H1 (cell line): ENCODE measurements at regions of chr20 and their contacts with region 1.

Region 1: DNA sequence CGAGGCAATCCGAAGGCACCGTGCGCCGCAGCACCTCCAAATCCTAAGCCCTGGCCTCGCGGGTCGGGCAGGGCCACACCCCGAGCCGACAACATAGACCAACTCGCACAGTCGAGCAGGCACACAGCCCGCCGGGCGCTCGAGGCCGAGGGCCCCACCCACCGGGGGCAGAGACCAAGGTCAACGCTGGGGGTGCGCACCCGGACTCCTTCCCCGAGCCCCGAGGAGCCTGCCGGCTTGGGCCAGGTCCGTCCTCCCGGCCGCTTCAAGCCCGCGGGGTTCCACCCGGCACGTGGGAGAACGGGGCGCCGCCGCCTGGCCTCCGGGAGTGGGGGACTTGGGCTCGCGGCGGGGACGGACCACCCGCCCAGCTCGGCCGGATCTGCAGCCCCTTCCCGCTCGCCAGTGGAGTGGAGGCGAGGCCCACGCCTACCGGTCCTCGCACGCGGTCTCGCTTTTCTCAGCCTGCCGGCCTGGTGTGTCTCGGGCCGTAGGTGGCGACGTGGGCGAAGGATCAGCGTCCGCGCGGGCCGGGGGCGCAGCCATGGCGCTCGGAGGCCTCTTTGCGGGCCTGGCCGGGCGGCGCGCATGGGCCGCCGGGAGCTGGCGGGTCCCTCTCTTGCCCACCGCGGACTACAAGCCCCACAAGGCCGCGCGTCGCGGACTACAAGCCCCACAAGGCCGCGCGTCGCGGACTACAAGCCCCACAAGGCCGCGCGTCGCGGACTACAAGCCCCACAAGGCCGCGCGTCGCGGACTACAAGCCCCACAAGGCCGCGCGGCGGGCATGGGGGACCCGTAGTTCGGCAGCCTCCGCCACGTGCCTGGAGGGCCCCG is at the start of gene UCKL1:
- DNase-seq: peak in 1 of 2 experiments; percentile 91
- H3K4me3 ChIP-seq: peak within 1 kb of the TSS; percentile 94 to 98 (median 96)
- H3K27ac ChIP-seq: peak within 1 kb of the TSS; percentile 69
- H3K4me1 ChIP-seq: peaks cover 0 to 19% (median 12%) of the 10 kb centered on the region in 4 experiments; a peak in 6 of 7 replicates
- H3K27me3 ChIP-seq: no peaks in the 10 kb centered on the region
- CTCF ChIP-seq: no peak
- EP300 ChIP-seq: no peak
- POLR2A ChIP-seq: peak in 1 of 2 experiments; percentile 84; a peak in 1 of 3 replicates
- RAD21 ChIP-seq: no peak
- total RNA-seq, gene UCKL1: 36.5 and 37.4 TPM in 2 replicates

Region 2: DNA sequence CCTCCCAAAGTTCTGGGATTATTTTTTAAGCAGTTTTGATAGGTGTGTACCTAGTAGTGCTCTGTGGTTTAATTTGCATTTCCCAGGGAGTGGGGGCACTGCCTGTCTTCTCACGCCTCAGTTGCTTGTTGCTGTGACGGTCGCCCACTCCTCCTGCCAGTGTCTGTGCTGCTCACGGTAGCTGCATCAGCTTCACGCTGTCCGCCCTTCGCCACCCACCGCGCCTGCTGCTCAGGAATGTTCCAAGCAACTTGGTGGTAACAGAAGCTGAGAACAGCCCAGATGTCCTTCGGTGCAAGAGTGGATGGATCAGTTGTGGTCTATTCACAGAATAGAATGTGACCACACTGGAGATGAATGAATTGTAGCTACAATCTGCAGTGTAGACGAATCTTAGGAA is 38.2 kb before region 1 on chr20:
- CTCF ChIA-PET with region 1: no interaction called
- POLR2A ChIA-PET with region 1: no interaction called
- DNase-seq: no peak
- H3K4me3 ChIP-seq: no peak overlapping the region
- H3K27ac ChIP-seq: no peak overlapping the region
- H3K4me1 ChIP-seq: no peaks in the 10 kb centered on the region; a peak in 2 of 7 replicates
- H3K27me3 ChIP-seq: no peaks in the 10 kb centered on the region
- CTCF ChIP-seq: no peak
- EP300 ChIP-seq: no peak
- POLR2A ChIP-seq: no peak
- RAD21 ChIP-seq: no peak

Region 3: GRCh38 chr20:63942250-63942959 is 13.6 kb before region 1 on chr20:
- CTCF ChIA-PET with region 1: interaction called, 7 read pairs
- POLR2A ChIA-PET with region 1: interaction called, 68 read pairs
- DNase-seq: peak; percentile 78 to 88
- H3K4me3 ChIP-seq: peak overlapping the region in 2 of 4 experiments; percentile 0 to 42; a peak in 5 of 8 replicates
- H3K27ac ChIP-seq: no peak overlapping the region
- H3K4me1 ChIP-seq: peaks cover 0 to 28% (median 13%) of the 10 kb centered on the region in 4 experiments; a peak in 6 of 7 replicates
- H3K27me3 ChIP-seq: no peaks in the 10 kb centered on the region
- CTCF ChIP-seq: no peak
- EP300 ChIP-seq: no peak
- POLR2A ChIP-seq: no peak
- RAD21 ChIP-seq: no peak

Region 4: GRCh38 chr20:64161356-64162238 is 205.6 kb after region 1 on chr20:
- CTCF ChIA-PET with region 1: no interaction called
- POLR2A ChIA-PET with region 1: no interaction called
- DNase-seq: peak; percentile 47 to 85
- H3K4me3 ChIP-seq: peak overlapping the region in 1 of 4 experiments; percentile 49; a peak in 4 of 8 replicates
- H3K27ac ChIP-seq: no peak overlapping the region
- H3K4me1 ChIP-seq: peaks cover 6 to 28% (median 20%) of the 10 kb centered on the region in 4 experiments
- H3K27me3 ChIP-seq: peaks cover 4 to 11% (median 10%) of the 10 kb centered on the region in 4 experiments; a peak in 6 of 7 replicates
- CTCF ChIP-seq: no peak
- EP300 ChIP-seq: no peak
- POLR2A ChIP-seq: no peak
- RAD21 ChIP-seq: peak; percentile 1 to 25; a peak in 2 of 4 replicates